ENCODE measurements at regions of chr20 and their contacts with region 1.

Region 1: GRCh38 chr20:35741892-35742740 is at the start of gene RBM39:
- DNase-seq: peak; percentile 98 to 100
- H3K4me3 ChIP-seq: peak within 1 kb of the TSS; percentile 79 to 82
- H3K27ac ChIP-seq: peak within 1 kb of the TSS; percentile 98
- H3K4me1 ChIP-seq: peaks cover 48% of the 10 kb centered on the region
- H3K27me3 ChIP-seq: no peaks in the 10 kb centered on the region
- CTCF ChIP-seq: peak; percentile 17 to 43 (median 17)
- POLR2A ChIP-seq: peak in 1 of 2 donors; percentile 98
- total RNA-seq, gene RBM39: 370 TPM

Region 2: DNA sequence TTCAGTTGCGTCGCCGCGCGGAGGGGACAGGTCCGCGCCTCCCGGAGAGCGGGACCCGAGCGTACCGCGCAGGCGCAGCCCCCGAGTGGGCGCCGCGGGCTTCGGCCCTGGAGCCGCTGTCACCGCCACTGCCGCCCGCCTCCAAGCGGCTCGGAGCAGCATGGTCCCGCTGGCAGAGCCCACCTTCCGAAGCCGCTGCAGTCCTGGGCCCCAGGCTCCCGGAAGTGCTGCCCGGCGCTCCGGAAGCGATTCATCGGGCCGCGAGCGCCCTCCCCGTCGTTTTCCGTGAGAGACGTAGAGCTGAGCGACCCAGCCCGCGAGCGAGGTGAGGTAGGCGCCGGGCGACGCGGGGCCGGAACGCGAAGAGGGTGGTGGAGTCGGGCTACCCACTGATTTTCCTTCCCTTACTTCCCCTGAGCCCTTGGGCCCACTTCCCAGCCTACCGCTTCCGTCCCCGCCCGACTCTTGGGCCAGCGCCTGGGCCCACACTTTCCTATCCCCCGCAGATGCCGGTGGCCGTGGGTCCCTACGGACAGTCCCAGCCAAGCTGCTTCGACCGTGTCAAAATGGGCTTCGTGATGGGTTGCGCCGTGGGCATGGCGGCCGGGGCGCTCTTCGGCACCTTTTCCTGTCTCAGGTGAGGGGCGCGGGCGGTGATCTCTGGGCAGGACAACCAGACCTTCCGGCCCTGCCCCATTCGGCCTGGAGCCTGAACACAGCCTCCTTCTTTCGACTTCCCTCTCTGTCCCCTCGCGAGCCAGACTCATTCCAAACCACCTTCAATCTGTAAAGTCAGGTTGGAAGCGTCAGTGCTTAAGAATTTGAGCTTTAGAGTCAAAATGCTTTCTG is 42.8 kb before region 1 on chr20 and contains the starts of genes NFS1 and ROMO1:
- intact Hi-C with region 1: loop called (anchors 2 kb)
- DNase-seq: peak in 1 of 2 donors; percentile 86
- H3K4me3 ChIP-seq: peak within 1 kb of the TSS; percentile 79 to 89
- H3K27ac ChIP-seq: peak within 1 kb of the TSS; percentile 84
- H3K4me1 ChIP-seq: peaks cover 24% of the 10 kb centered on the region
- H3K27me3 ChIP-seq: no peaks in the 10 kb centered on the region
- CTCF ChIP-seq: peak in 1 of 3 experiments; percentile 4
- POLR2A ChIP-seq: peak in 1 of 2 donors; percentile 37
- total RNA-seq, gene NFS1: 15.2 TPM
- total RNA-seq, gene ROMO1: 248 TPM

Region 3: DNA sequence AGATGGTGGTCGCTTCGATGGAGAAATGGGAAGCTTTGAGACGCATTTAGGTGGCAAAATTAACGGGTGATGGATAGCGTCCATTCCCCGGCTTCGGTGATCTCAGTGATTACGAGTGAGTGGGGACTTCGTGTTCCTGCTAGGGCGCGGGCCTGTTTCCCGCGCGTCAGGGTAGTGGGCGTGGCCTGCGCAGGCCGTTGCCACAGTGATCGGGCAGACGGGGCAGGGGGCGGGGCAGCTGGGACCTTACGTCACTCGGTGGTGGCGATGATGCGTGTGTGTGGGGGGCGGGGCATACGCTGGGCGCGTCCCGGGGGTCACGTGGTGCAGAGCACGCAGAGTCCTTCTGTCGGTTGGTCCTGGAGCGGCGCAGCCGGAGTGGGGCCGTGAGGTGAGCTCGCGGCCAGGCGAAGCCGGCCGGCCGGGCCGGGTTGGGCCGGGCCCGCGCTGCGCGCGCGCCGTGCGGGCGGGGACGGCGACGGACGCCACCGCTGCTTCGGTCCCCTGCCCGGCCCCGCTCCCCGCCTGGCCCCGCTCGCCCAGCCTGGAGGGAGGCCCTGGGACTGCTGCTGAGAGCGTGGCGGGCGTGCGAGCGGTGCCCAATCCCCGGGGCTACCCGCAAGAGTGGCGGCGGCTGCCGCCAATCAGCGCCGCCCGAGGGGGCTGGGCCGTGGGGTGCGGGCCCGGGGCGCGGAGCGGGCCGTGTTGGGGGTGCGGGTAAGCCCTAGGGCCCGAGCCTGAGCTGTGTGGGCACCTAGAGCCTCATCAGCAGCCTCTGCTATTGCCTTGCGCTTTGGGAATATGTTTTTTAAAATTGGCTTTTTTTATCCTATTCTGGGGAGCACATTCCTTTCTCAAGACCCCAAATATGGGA is 29.8 kb after region 1 on chr20 and contains the start of gene PHF20:
- intact Hi-C with region 1: loop called (anchors 2 kb)
- DNase-seq: peak; percentile 98 to 99
- H3K4me3 ChIP-seq: peak within 1 kb of the TSS; percentile 73 to 79
- H3K27ac ChIP-seq: peak within 1 kb of the TSS; percentile 97
- H3K4me1 ChIP-seq: peaks cover 86% of the 10 kb centered on the region
- H3K27me3 ChIP-seq: no peaks in the 10 kb centered on the region
- CTCF ChIP-seq: no peak
- POLR2A ChIP-seq: peak; percentile 8 to 82
- total RNA-seq, gene PHF20: 37.3 TPM

Region 4: GRCh38 chr20:35883778-35884540 is 141.8 kb after region 1 on chr20:
- intact Hi-C with region 1: loop called (anchors 10 kb)
- DNase-seq: peak in 1 of 2 donors; percentile 97
- H3K4me3 ChIP-seq: no peak overlapping the region
- H3K27ac ChIP-seq: peak overlapping the region; percentile 74
- H3K4me1 ChIP-seq: peaks cover 7% of the 10 kb centered on the region
- H3K27me3 ChIP-seq: no peaks in the 10 kb centered on the region
- CTCF ChIP-seq: peak; percentile 61 to 75 (median 71)
- POLR2A ChIP-seq: no peak

Measured in vagina (tissue), 2 donors.